ENCODE measurements at regions of chr19 and their contacts with region 1.

Region 1: GRCh38 chr19:40221858-40222837 is 4.0 kb upstream of the TTC9B start:
- DNase-seq: peak; percentile 54 to 91 (median 66)
- ATAC-seq: peak; percentile 89
- H3K4me3 ChIP-seq: no peak overlapping the region
- H3K4me3 Mint-ChIP-seq: peak overlapping the region; percentile 26
- H3K27ac ChIP-seq: no peak overlapping the region
- H3K27ac Mint-ChIP-seq: peak overlapping the region; percentile 2
- H3K4me1 ChIP-seq: peaks cover 44% of the 10 kb centered on the region
- H3K4me1 Mint-ChIP-seq: peaks cover 16% of the 10 kb centered on the region
- H3K27me3 ChIP-seq: peaks cover 56 to 58% of the 10 kb centered on the region in 2 experiments
- H3K27me3 Mint-ChIP-seq: peaks cover 68% of the 10 kb centered on the region
- CTCF ChIP-seq: peak; percentile 86

Region 2: GRCh38 chr19:39792999-39793546 is 429.1 kb before region 1 on chr19:
- CTCF ChIA-PET with region 1: no interaction called
- POLR2A ChIA-PET with region 1: no interaction called
- intact Hi-C with region 1: loop called in 1 of 2 experiments (anchors 2 kb)
- DNase-seq: peak; percentile 52 to 83 (median 64)
- ATAC-seq: peak; percentile 94
- H3K4me3 ChIP-seq: peak overlapping the region; percentile 58
- H3K4me3 Mint-ChIP-seq: peak overlapping the region; percentile 81
- H3K27ac ChIP-seq: no peak overlapping the region
- H3K27ac Mint-ChIP-seq: no peak overlapping the region
- H3K4me1 ChIP-seq: peaks cover 7% of the 10 kb centered on the region
- H3K4me1 Mint-ChIP-seq: no peaks in the 10 kb centered on the region
- H3K27me3 ChIP-seq: no peaks in the 10 kb centered on the region
- H3K27me3 Mint-ChIP-seq: peaks cover 11% of the 10 kb centered on the region
- CTCF ChIP-seq: peak; percentile 90

Region 3: GRCh38 chr19:39889872-39890545 is 332.1 kb before region 1 on chr19:
- CTCF ChIA-PET with region 1: no interaction called
- POLR2A ChIA-PET with region 1: no interaction called
- intact Hi-C with region 1: loop called in 1 of 2 experiments (anchors 10 kb)
- DNase-seq: no peak
- ATAC-seq: no peak
- H3K4me3 ChIP-seq: no peak overlapping the region
- H3K4me3 Mint-ChIP-seq: no peak overlapping the region
- H3K27ac ChIP-seq: no peak overlapping the region
- H3K27ac Mint-ChIP-seq: no peak overlapping the region
- H3K4me1 ChIP-seq: peaks cover 4% of the 10 kb centered on the region
- H3K4me1 Mint-ChIP-seq: no peaks in the 10 kb centered on the region
- H3K27me3 ChIP-seq: no peaks in the 10 kb centered on the region
- H3K27me3 Mint-ChIP-seq: no peaks in the 10 kb centered on the region
- CTCF ChIP-seq: no peak

Region 4: DNA sequence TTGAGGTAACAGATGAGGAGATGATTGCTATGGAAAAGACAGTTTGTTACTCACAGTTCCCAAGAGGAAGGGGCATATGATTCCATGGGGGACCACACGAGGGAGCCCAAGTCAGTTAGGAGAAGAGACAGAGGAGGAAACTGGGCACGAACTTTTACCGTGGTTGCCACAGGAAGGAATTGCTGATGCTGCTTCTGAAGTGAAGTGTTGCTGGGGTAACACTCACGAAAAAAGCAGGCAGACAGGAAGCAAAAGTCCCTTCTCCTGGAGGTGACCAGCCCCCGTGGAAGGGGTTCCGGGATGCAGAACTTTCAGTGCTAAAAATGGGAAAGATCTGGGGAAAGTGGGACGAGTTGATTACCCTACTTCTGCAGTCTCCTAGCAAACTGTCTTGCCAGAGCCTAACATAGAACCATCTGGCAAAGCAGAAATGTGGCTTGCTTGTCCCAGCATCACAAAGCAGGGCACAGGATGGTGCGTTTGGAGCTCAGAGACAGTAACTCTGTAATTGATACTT is 66.3 kb before region 1 on chr19:
- CTCF ChIA-PET with region 1: no interaction called
- POLR2A ChIA-PET with region 1: no interaction called
- intact Hi-C with region 1: no loop called
- DNase-seq: peak in 1 of 14 experiments; percentile 27
- ATAC-seq: no peak
- H3K4me3 ChIP-seq: no peak overlapping the region
- H3K4me3 Mint-ChIP-seq: no peak overlapping the region
- H3K27ac ChIP-seq: no peak overlapping the region
- H3K27ac Mint-ChIP-seq: no peak overlapping the region
- H3K4me1 ChIP-seq: peaks cover 5% of the 10 kb centered on the region
- H3K4me1 Mint-ChIP-seq: no peaks in the 10 kb centered on the region
- H3K27me3 ChIP-seq: no peaks in the 10 kb centered on the region
- H3K27me3 Mint-ChIP-seq: no peaks in the 10 kb centered on the region
- CTCF ChIP-seq: no peak

Region 5: GRCh38 chr19:40210921-40211320 is 11.2 kb before region 1 on chr19:
- CTCF ChIA-PET with region 1: no interaction called
- POLR2A ChIA-PET with region 1: no interaction called
- intact Hi-C with region 1: no loop called
- DNase-seq: no peak
- ATAC-seq: no peak
- H3K4me3 ChIP-seq: no peak overlapping the region
- H3K4me3 Mint-ChIP-seq: no peak overlapping the region
- H3K27ac ChIP-seq: no peak overlapping the region
- H3K27ac Mint-ChIP-seq: no peak overlapping the region
- H3K4me1 ChIP-seq: no peaks in the 10 kb centered on the region
- H3K4me1 Mint-ChIP-seq: no peaks in the 10 kb centered on the region
- H3K27me3 ChIP-seq: peaks cover under 1 to 2% of the 10 kb centered on the region in 2 experiments
- H3K27me3 Mint-ChIP-seq: peaks cover 5% of the 10 kb centered on the region
- CTCF ChIP-seq: no peak